Activated naive CD4-positive, alpha-beta T cell treated with anti-CD3 and anti-CD28 coated beads, Interleukin-2, amount 10 ng/mL, durations not matched to agents 7 days and 5 days (primary cell): ENCODE measurements at regions of chr13 and their contacts with region 1.

Region 1: DNA sequence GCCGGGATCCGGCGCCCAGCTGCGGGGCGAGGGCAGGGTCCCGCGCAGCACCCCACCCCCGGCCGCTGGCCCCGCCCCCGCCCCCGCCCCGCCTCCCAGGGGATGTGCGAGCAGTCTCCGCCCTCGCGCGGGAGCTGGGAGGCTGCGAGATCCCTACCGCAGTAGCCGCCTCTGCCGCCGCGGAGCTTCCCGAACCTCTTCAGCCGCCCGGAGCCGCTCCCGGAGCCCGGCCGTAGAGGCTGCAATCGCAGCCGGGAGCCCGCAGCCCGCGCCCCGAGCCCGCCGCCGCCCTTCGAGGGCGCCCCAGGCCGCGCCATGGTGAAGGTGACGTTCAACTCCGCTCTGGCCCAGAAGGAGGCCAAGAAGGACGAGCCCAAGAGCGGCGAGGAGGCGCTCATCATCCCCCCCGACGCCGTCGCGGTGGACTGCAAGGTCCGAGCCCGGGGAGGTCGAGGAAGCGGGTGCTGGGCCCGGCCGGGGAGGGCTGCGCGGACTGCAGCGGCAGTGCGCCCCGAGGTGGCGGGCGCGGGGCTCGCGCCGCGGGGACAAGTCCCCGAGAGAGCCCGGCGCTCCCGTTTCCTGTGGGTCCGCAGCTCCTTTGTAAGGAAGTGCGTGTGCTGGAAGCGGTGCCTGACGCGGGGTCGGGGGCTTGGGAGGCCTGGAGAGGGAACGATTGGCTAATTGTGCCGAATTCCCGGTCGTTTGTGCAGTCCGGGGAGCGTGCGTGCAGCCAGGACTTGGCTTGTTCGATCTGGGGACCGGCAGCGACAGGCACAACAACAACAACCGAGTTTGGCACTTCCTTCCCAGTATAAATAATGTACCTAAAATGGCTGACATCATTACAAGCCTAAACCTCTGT is at the start of gene ITM2B:
- DNase-seq: peak; percentile 76
- H3K4me3 Mint-ChIP-seq: peak within 1 kb of the TSS; percentile 93
- H3K27ac Mint-ChIP-seq: peak within 1 kb of the TSS; percentile 95
- H3K4me1 Mint-ChIP-seq: peaks cover 47% of the 10 kb centered on the region
- H3K27me3 Mint-ChIP-seq: peaks cover 15% of the 10 kb centered on the region

Region 2: DNA sequence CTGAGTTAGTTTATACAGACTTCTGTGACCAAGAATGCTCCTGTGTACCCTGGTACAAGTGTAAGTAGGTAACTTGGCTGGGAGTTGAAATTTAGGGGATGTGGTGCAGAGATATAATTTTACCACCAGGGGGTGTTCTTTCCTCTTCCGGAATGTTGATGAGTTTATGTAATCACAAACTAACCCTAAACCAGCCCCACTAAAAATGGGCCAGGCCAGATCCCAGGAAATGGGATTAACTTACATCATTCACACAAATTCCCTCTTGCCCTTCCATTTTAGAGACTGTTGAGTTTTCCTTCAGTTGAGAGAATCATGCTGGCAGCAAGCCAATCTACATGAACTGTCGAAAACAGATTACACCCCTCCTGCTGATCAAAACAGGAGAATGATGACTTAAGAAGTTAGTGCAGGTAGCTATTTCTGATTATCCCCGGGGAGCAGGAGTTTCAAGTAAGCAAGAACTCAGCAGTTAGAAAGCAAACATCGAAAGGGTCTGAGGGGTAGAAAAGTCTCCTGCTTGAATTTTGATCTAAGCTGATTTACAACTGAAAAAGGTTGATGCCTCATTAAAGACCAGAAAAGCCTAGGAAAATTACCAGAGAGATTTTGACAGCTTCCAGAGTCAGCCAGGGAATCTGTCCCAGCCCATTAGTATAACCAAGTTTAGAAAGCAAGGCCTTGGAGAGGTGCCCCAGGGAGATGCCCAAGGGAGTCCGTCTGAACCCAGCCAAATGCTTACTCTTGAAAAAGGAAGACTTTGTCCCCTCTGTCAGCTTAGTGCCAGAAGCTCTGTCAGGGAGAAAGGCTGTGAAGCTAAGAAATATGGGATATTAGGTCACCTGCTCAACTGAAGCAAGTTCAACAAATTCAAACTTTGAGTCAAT is 106.1 kb before region 1 on chr13:
- CTCF ChIA-PET with region 1: interaction called, 21 read pairs
- DNase-seq: peak; percentile 37
- H3K4me3 Mint-ChIP-seq: no peak overlapping the region
- H3K27ac Mint-ChIP-seq: peak overlapping the region; percentile 15
- H3K4me1 Mint-ChIP-seq: peaks cover 31% of the 10 kb centered on the region
- H3K27me3 Mint-ChIP-seq: no peaks in the 10 kb centered on the region